ENCODE measurements at regions of chr17 and their contacts with region 1.

Region 1: GRCh38 chr17:1331708-1332107 is 52.2 kb downstream of the TRARG1 start:
- H3K4me3 Mint-ChIP-seq: no peak overlapping the region
- H3K27ac Mint-ChIP-seq: no peak overlapping the region
- H3K4me1 Mint-ChIP-seq: peaks cover 12% of the 10 kb centered on the region
- H3K27me3 Mint-ChIP-seq: peaks cover 50% of the 10 kb centered on the region

Region 2: DNA sequence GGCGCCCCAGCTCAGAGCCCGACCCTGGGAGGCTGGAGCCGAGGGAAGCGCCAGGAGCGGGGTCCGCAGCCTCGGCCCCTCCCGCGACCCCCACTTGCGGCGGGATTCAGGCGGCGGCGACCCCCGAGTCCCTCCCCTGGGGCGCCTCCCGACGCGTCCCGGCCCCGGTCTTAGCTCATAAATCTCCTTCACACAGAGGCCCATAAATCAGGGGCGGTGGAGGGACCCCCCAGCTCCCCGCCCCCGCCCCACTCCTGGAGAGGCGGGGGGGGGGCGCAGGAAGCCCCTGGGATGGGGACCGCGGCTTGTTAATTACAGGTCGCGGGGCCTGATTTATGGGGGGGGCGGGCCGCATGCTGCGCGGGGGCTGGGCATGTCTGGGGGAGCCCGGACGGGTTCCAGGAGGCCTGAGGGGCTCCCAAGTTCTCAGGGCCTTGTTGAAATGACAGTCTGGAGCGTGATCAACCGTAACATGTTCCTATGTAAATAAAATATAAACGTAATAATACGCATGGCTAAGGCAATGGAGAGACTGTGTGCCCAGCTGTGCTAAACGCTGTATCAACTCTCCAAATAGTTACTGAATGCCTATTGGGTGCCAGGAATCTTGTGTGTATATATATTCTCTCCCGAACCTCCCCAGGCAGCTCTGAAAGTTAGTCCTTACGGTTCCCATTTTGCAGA is 71.5 kb before region 1 on chr17:
- intact Hi-C with region 1: loop called (anchors 1 kb)
- H3K4me3 Mint-ChIP-seq: no peak overlapping the region
- H3K27ac Mint-ChIP-seq: peak overlapping the region; percentile 5
- H3K4me1 Mint-ChIP-seq: peaks cover 25% of the 10 kb centered on the region
- H3K27me3 Mint-ChIP-seq: peaks cover 76% of the 10 kb centered on the region

Region 3: GRCh38 chr17:1275962-1276736 is 55.6 kb before region 1 on chr17:
- intact Hi-C with region 1: loop called (anchors 5 kb)
- H3K4me3 Mint-ChIP-seq: no peak overlapping the region
- H3K27ac Mint-ChIP-seq: peak overlapping the region; percentile 18
- H3K4me1 Mint-ChIP-seq: peaks cover 14% of the 10 kb centered on the region
- H3K27me3 Mint-ChIP-seq: peaks cover 80% of the 10 kb centered on the region

Measured in dendritic cell treated with granulocyte-macrophage colony-stimulating factor and Interleukin-4, amounts not matched to agents 40 ng/mL and 50 ng/mL, for 4 days (primary cell).